ENCODE measurements at regions of chr5 and their contacts with region 1.

Region 1: GRCh38 chr5:143200781-143201398 is 202.6 kb downstream of the NR3C1 start:
- DNase-seq: peak; percentile 97
- H3K4me3 Mint-ChIP-seq: peak overlapping the region; percentile 15
- H3K27ac Mint-ChIP-seq: peak overlapping the region; percentile 84
- H3K4me1 Mint-ChIP-seq: peaks cover 45% of the 10 kb centered on the region
- H3K27me3 Mint-ChIP-seq: no peaks in the 10 kb centered on the region
- CTCF ChIP-seq: no peak

Region 2: GRCh38 chr5:143061161-143061945 is 139.5 kb before region 1 on chr5:
- CTCF ChIA-PET with region 1: no interaction called
- POLR2A ChIA-PET with region 1: interaction called, 11 read pairs
- intact Hi-C with region 1: no loop called
- DNase-seq: peak; percentile 69
- H3K4me3 Mint-ChIP-seq: peak overlapping the region; percentile 6
- H3K27ac Mint-ChIP-seq: peak overlapping the region; percentile 81
- H3K4me1 Mint-ChIP-seq: peaks cover 49% of the 10 kb centered on the region
- H3K27me3 Mint-ChIP-seq: no peaks in the 10 kb centered on the region
- CTCF ChIP-seq: no peak

Region 3: GRCh38 chr5:143153332-143154119 is 47.4 kb before region 1 on chr5:
- CTCF ChIA-PET with region 1: interaction called, 3 read pairs
- POLR2A ChIA-PET with region 1: interaction called, 13 read pairs
- intact Hi-C with region 1: no loop called
- DNase-seq: no peak
- H3K4me3 Mint-ChIP-seq: no peak overlapping the region
- H3K27ac Mint-ChIP-seq: peak overlapping the region; percentile 96
- H3K4me1 Mint-ChIP-seq: peaks cover 43% of the 10 kb centered on the region
- H3K27me3 Mint-ChIP-seq: no peaks in the 10 kb centered on the region
- CTCF ChIP-seq: no peak

Region 4: GRCh38 chr5:143177263-143177983 is 23.5 kb before region 1 on chr5:
- CTCF ChIA-PET with region 1: interaction called, 5 read pairs
- POLR2A ChIA-PET with region 1: interaction called, 33 read pairs
- intact Hi-C with region 1: loop called (anchors 1 kb)
- DNase-seq: peak; percentile 99
- H3K4me3 Mint-ChIP-seq: no peak overlapping the region
- H3K27ac Mint-ChIP-seq: peak overlapping the region; percentile 86
- H3K4me1 Mint-ChIP-seq: peaks cover 16% of the 10 kb centered on the region
- H3K27me3 Mint-ChIP-seq: no peaks in the 10 kb centered on the region
- CTCF ChIP-seq: no peak

Region 5: DNA sequence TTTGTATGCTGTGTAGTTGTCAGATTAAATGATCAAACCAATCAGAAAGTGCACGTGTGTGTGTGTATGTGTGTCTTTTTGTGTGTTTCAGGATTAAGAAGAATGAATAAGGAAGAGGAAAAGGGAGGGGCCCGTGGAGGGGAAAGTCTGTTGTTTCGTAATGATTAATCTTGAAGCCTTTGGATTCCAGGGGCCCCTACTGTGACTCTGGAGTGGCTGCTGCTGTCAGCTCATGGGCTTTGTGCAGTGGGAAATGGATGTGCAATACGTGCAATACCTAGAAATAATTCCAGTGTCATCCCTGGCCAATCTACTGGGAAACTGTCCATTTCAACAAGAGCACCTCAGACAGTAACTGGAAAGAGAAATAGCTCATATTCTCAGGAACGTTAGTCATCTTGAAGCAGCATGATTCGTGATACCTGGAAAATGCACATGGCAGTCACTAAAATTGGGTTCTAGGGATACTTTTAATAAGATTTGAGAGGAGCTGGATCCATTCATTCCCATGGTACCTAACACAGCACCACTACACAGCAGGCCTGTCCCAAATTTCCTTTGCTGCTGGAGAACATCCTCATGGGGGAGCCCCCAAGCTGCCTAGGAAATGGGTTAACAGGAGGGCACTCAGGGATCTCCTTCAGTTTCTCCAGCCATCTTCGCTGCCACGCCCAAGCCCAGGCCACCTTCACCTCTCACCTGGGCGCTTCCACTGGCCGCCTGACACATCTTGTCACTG is 16.3 kb after region 1 on chr5:
- CTCF ChIA-PET with region 1: no interaction called
- POLR2A ChIA-PET with region 1: interaction called, 26 read pairs
- intact Hi-C with region 1: no loop called
- DNase-seq: peak; percentile 60
- H3K4me3 Mint-ChIP-seq: no peak overlapping the region
- H3K27ac Mint-ChIP-seq: peak overlapping the region; percentile 75
- H3K4me1 Mint-ChIP-seq: peaks cover 29% of the 10 kb centered on the region
- H3K27me3 Mint-ChIP-seq: no peaks in the 10 kb centered on the region
- CTCF ChIP-seq: no peak

Region 6: DNA sequence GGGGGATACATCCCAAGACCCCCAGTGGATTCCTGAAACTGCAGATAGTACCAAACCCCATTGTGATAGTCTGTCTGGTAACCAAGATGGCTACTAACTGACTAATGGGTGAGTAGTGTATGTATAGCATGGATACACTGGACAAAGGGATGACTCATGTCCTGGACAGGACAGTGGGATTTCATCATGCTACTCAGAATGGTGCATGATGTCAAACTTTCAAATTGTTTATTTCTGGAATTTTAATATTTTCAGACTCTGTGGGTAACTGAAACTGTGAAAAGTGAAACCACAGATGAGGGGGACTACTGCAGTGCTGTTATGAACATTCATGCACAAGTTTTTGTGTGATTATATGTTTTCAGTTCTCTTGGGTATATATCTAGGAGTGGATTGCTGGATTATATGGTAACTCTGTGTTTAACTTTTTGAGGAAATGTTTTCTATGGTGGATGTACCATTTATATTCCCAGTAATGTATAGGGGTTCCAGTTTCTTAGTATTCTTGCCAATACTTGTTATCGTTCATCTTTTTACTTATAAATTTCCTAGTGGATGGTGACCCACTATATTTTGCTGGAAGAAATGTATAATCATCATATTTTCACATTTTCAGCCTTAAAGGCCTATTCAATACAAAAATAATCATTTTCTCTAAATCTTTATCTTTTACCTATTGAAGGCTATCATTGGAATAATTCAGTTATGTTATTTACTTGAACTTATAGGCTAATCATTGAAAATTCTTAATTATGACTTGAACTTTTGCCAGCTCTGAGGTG is 61.7 kb after region 1 on chr5:
- CTCF ChIA-PET with region 1: no interaction called
- POLR2A ChIA-PET with region 1: interaction called, 6 read pairs
- intact Hi-C with region 1: loop called (anchors 5 kb)
- DNase-seq: peak; percentile 95
- H3K4me3 Mint-ChIP-seq: peak overlapping the region; percentile 7
- H3K27ac Mint-ChIP-seq: peak overlapping the region; percentile 61
- H3K4me1 Mint-ChIP-seq: peaks cover 35% of the 10 kb centered on the region
- H3K27me3 Mint-ChIP-seq: no peaks in the 10 kb centered on the region
- CTCF ChIP-seq: no peak

Region 7: GRCh38 chr5:143434261-143435209 is 233.6 kb after region 1 on chr5:
- CTCF ChIA-PET with region 1: no interaction called
- POLR2A ChIA-PET with region 1: no interaction called
- intact Hi-C with region 1: no loop called
- DNase-seq: no peak
- H3K4me3 Mint-ChIP-seq: no peak overlapping the region
- H3K27ac Mint-ChIP-seq: no peak overlapping the region
- H3K4me1 Mint-ChIP-seq: peaks cover 16% of the 10 kb centered on the region
- H3K27me3 Mint-ChIP-seq: no peaks in the 10 kb centered on the region
- CTCF ChIP-seq: no peak

Region 8: GRCh38 chr5:144788046-144788445 is 1587.2 kb after region 1 on chr5:
- CTCF ChIA-PET with region 1: no interaction called
- POLR2A ChIA-PET with region 1: no interaction called
- intact Hi-C with region 1: no loop called
- DNase-seq: no peak
- H3K4me3 Mint-ChIP-seq: no peak overlapping the region
- H3K27ac Mint-ChIP-seq: no peak overlapping the region
- H3K4me1 Mint-ChIP-seq: no peaks in the 10 kb centered on the region
- H3K27me3 Mint-ChIP-seq: no peaks in the 10 kb centered on the region
- CTCF ChIP-seq: no peak